Lower leg skin (tissue), 4 donors: ENCODE measurements at regions of chr4 and their contacts with region 1.

Region 1: DNA sequence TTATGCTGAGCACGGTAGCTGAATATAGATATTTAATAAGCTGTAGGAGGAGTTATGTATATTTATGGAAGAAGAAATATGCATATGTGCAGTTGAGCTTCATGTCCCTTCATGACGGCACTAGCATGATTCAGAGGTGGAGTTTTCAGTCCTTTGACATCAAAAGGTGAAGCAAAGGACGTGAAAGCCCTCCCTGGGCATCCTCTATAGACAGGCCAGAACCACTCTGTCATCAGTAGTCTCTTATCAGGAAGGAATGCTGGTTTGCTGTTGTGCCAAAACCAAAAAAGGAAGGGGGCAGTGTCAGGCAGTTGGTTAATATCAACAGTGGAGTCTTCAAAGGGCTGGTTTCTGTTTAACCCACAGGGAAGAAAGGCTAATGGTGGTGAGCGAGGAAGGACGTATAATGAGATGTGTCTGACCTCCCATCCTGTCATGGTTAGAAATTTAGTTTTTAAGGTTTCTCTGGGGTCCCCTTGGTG is 23.5 kb upstream of the IL2 start:
- DNase-seq: no peak
- H3K4me3 ChIP-seq: no peak overlapping the region
- CTCF ChIP-seq: no peak
- POLR2A ChIP-seq: no peak

Region 2: DNA sequence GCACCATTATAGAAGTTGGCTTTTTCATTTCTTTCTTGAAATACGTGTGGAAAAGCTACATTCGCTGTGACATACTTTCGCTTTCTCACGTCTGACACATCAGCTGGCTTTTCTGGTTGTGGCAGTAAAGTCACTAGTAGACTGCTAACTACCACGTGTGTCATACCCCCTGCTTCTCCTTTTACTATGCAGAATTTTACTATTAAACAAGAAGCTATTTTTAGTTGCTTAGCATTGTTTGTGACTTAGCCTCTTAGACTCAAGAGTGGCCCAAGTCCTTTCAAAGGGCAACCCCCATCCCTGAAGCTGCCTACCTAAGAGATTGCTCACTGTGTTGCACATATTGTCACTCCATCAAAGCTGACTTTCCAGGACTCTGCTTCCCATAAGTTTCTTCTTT is 21.4 kb before region 1 on chr4:
- intact Hi-C with region 1: loop called (anchors 2 kb)
- DNase-seq: no peak
- H3K4me3 ChIP-seq: no peak overlapping the region
- CTCF ChIP-seq: no peak
- POLR2A ChIP-seq: no peak